Spleen (tissue), 13 donors: ENCODE measurements at regions of chr5 and their contacts with region 1.

Region 1: DNA sequence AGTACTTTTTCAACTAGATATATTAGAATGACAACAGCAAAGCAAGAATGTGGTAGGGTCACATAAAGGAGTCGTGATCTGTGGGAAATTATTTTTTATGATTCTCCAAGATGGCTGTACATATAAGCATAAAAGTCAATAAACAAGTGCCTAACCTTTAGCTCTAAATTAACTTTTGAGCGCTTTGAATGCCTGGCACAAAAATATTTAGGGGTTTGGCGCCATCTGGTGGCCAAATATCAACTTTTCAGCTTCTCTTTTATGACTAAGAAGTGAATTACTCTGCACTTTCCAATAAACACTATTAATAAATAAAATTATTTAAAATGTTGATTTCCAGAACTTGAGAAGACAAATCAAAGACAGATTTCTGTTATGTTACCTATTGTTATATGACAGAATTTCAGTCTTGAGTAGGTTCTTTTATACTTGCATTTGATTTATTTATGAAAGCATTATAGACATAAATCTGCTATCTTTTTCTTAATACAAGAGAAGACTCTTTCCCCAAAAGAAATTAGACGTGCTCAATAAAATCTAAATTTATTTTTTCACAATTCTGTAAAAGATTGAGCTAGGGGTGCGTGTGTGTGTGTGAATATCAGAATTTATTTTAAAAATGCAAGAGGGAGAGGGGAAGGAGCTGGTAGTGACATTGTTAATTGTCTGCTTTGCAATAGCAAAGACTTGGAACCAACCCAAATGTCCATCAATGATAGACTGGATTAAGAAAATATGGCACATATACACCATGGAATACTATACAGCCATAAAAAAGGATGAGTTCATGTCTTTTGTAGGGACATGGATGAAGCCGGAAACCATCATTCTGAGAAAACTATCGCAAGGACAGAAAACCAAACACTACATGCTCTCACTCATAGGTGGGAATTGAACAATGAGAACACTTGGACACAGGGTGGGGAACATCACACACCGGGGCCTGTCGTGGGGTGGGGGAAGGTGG is 36.7 kb upstream of the ARRDC3 start:
- DNase-seq: no peak
- H3K4me3 ChIP-seq: no peak overlapping the region
- H3K27ac ChIP-seq: no peak overlapping the region
- H3K4me1 ChIP-seq: peaks cover 0 to 7% (median 0%) of the 10 kb centered on the region in 6 donors
- H3K27me3 ChIP-seq: no peaks in the 10 kb centered on the region
- CTCF ChIP-seq: peak; percentile 48 to 82 (median 71)
- POLR2A ChIP-seq: no peak

Region 2: DNA sequence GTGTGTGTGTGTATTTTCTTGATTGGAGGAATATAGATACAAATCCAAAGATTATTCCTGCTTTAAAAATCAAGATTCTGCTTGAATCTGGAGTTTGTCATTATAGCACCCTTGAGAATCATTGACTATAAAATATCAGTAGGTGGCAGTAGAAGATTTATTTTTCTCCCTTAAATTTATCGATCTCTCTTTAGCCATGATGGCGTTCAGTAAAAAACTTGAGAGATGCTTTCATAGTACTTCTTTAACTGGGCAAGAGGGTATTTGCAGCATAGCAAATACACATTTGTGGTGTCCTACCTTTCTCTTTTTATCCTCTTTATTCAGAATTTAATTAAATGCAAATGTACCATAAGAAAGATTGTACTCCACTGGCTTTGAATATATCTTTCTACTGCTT is 553.5 kb before region 1 on chr5:
- intact Hi-C with region 1: loop called (anchors 5 kb)
- DNase-seq: no peak
- H3K4me3 ChIP-seq: no peak overlapping the region
- H3K27ac ChIP-seq: peak overlapping the region in 1 of 8 donors; percentile 46
- H3K4me1 ChIP-seq: peaks cover 0 to 10% (median 2%) of the 10 kb centered on the region in 6 donors
- H3K27me3 ChIP-seq: no peaks in the 10 kb centered on the region
- CTCF ChIP-seq: peak in 10 of 11 experiments; percentile 7 to 58 (median 44)
- POLR2A ChIP-seq: no peak

Region 3: GRCh38 chr5:91266184-91266705 is 153.6 kb before region 1 on chr5:
- intact Hi-C with region 1: no loop called
- DNase-seq: no peak
- H3K4me3 ChIP-seq: no peak overlapping the region
- H3K27ac ChIP-seq: no peak overlapping the region
- H3K4me1 ChIP-seq: peaks cover 0 to 6% (median 0%) of the 10 kb centered on the region in 6 donors
- H3K27me3 ChIP-seq: no peaks in the 10 kb centered on the region
- CTCF ChIP-seq: peak in 1 of 11 experiments; percentile 23
- POLR2A ChIP-seq: no peak